Activated T-helper 1 cell treated with anti-CD3 and anti-CD28 coated beads, Interleukin-12 subunit alpha, Interleukin-12 subunit beta, Interleukin-2, Interleukin-4 antibody, amounts not matched to agents 30 ng/mL and 10 ng/mL and 1 ng/mL, durations not matched to agents 14 hours and 24 hours and 36 hours (primary cell): ENCODE measurements at regions of chr11 and their contacts with region 1.

Region 1: DNA sequence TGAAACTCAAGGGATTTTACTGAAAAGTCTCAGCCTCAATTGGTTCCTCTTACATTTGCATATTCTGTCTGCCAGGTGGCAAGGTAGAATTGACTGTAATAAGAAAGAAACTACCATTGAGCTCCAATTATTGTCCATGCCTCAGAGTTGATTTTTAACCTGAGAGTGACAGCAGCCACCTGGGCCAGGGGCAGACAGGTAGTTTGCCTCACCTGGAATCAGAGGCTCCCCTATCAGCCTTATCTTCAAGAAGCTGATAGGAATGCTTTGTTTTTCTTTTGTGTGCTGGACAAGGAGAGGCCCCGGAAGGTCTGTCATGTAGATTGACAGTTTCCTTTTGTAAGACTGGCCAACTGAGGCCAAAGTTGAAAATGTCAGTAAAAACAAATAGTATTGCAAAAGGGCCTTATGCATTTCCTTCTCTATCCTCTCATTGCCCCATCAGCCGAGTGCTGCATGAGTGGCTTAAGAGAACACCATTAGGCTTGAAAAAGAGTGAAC is 34.1 kb downstream of the CD44 start:
- DNase-seq: no peak
- H3K4me3 Mint-ChIP-seq: peak overlapping the region; percentile 56
- H3K27ac Mint-ChIP-seq: peak overlapping the region; percentile 75
- H3K4me1 Mint-ChIP-seq: peaks cover 92% of the 10 kb centered on the region
- H3K27me3 Mint-ChIP-seq: no peaks in the 10 kb centered on the region

Region 2: DNA sequence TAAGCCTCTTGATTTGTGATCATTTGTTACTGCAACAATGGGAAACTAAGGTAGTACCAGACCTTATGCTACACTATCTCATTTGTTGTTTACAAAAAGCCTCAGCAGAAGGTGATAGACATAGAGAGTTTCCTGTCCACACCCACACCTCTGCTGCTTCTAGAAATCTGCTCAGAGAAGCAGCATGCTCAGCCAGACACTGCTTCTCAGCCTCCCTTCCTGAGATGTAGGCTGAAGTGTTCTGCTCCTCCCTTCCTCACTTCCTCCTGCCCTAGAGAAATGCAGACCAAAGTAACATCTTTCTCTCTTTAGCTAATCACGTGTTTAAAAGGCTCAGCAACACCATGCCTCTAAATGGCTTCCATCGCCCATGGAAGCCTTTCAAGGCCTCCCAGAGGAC is 157.9 kb after region 1 on chr11:
- intact Hi-C with region 1: no loop called
- DNase-seq: peak; percentile 46
- H3K4me3 Mint-ChIP-seq: peak overlapping the region; percentile 10
- H3K27ac Mint-ChIP-seq: peak overlapping the region; percentile 5
- H3K4me1 Mint-ChIP-seq: peaks cover 41% of the 10 kb centered on the region
- H3K27me3 Mint-ChIP-seq: peaks cover 2% of the 10 kb centered on the region

Region 3: GRCh38 chr11:35343033-35343598 is 170.1 kb after region 1 on chr11:
- intact Hi-C with region 1: loop called (anchors 1 kb)
- DNase-seq: peak; percentile 65
- H3K4me3 Mint-ChIP-seq: peak overlapping the region; percentile 27
- H3K27ac Mint-ChIP-seq: peak overlapping the region; percentile 79
- H3K4me1 Mint-ChIP-seq: peaks cover 46% of the 10 kb centered on the region
- H3K27me3 Mint-ChIP-seq: peaks cover 9% of the 10 kb centered on the region

Region 4: GRCh38 chr11:35507688-35508087 is 334.6 kb after region 1 on chr11:
- intact Hi-C with region 1: no loop called
- DNase-seq: no peak
- H3K4me3 Mint-ChIP-seq: no peak overlapping the region
- H3K27ac Mint-ChIP-seq: no peak overlapping the region
- H3K4me1 Mint-ChIP-seq: no peaks in the 10 kb centered on the region
- H3K27me3 Mint-ChIP-seq: peaks cover 8% of the 10 kb centered on the region